ENCODE measurements at regions of chr11 and their contacts with region 1.

Region 1: DNA sequence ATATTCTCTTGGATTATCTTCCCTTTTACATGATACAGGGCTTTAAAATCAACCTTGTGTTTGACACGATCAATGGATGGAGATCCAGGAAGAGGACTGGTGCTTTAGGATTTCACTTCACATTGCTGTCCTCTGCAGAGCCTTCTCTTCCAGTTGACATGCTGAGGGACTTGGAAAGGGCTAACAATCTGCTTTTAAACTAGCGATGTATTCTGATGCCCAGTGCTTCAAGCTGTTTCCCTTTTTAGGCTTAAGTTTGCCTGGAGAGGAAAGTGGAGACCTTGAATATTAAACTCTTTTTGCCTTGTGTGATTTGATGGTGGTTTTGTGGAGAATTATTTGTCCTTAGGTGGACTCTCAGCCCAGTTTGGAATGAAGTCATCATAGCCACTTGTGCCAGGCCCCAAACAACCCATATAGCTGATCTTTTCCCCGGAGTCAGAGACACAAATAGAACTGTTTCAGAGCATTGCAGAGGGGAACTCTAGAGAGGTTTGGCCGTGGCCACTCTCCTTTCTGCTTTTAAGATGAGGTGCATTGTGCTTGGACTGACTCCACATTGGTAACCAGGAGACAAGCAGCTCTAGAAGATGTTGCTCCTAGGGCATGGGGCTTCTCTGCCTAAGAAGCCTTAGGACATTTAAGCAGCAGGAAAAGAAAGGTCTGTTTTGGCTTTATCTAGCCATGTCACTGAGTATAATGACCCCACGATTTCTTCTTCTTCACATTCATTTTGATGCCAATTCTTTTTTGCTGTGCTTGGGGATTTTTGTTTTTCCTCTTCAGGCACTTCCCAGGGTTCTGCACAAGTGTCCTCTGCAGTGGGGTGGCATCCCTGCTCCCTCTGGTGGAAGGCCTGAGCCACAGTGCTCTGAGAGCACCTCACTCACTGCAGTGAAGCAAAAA is 152.8 kb downstream of the NCAM1 start:
- DNase-seq: peak; percentile 66
- H3K4me3 Mint-ChIP-seq: no peak overlapping the region
- H3K27ac Mint-ChIP-seq: no peak overlapping the region
- H3K4me1 Mint-ChIP-seq: peaks cover 5% of the 10 kb centered on the region
- H3K27me3 Mint-ChIP-seq: no peaks in the 10 kb centered on the region
- CTCF ChIP-seq: peak; percentile 83

Region 2: DNA sequence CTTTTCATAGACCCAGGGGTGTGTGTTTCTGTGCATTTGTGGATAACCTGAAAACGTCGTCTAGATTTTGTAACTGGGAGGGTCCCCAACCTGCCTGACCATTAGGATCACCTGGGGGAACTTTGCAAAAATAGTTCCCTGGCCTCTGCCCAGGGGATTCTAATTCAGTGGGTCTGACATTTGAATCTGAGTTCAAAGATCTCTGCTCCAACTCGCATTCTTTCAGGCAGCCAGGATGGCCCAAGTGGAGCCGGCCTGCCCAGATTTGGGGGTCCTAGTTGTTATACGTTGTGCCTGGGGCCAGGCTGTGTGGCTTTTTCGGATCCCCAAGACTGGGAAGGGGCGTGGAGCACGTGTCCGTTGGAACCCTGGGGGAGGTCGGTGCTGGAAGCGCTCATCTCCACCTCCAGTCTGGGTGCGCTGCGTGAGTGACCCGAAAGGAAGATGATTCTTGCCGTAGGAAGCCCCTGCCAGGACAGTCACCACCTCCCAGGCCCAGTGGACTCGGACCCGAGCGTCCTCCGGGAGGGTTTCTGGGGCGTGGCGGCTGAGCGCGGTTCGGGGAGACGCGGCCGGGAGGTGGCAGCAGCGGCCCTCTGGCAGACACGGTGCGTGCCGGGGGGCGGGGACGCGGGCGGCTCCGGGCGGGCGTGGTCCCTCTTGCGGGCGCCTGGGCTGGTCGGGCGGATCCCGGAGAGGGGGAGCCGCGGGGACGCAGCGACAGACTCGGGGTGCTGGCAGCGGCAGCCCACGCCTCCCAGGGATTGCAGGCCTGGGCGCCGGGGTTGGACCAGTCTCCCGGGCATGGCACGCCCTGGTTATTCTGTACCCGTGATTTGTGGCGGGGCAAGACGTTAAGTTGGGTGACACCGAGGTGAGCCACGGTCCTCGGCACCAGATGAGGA is 824.2 kb before region 1 on chr11:
- CTCF ChIA-PET with region 1: interaction called, 15 read pairs
- POLR2A ChIA-PET with region 1: no interaction called
- intact Hi-C with region 1: loop called (anchors 5 kb)
- DNase-seq: peak; percentile 59
- H3K4me3 Mint-ChIP-seq: peak overlapping the region; percentile 67
- H3K27ac Mint-ChIP-seq: no peak overlapping the region
- H3K4me1 Mint-ChIP-seq: peaks cover 16% of the 10 kb centered on the region
- H3K27me3 Mint-ChIP-seq: peaks cover 11% of the 10 kb centered on the region
- CTCF ChIP-seq: peak; percentile 96

Region 3: GRCh38 chr11:112355726-112356125 is 758.3 kb before region 1 on chr11:
- CTCF ChIA-PET with region 1: no interaction called
- POLR2A ChIA-PET with region 1: no interaction called
- intact Hi-C with region 1: no loop called
- DNase-seq: peak; percentile 85
- H3K4me3 Mint-ChIP-seq: no peak overlapping the region
- H3K27ac Mint-ChIP-seq: no peak overlapping the region
- H3K4me1 Mint-ChIP-seq: no peaks in the 10 kb centered on the region
- H3K27me3 Mint-ChIP-seq: no peaks in the 10 kb centered on the region
- CTCF ChIP-seq: no peak

Region 4: DNA sequence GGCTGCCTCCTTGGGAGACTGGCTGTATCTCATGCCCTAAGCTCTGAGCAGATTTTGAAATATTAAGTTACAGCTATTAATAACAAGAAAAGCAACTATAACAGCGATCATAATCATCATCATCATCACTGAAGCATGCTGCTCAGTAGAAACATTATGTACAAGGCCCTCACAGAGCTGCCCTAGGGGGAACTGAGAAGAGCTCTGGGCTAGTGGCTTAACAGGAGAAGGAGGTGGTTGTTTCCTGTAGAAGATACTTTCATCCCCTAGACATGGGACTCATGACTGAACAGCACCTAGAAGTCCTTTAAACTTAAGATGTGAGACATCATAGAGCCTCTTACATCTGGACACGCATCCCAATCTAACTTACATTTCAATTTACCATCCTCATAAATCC is 520.6 kb before region 1 on chr11:
- CTCF ChIA-PET with region 1: interaction called, 69 read pairs
- POLR2A ChIA-PET with region 1: interaction called, 3 read pairs
- intact Hi-C with region 1: loop called (anchors 1 kb)
- DNase-seq: no peak
- H3K4me3 Mint-ChIP-seq: no peak overlapping the region
- H3K27ac Mint-ChIP-seq: no peak overlapping the region
- H3K4me1 Mint-ChIP-seq: no peaks in the 10 kb centered on the region
- H3K27me3 Mint-ChIP-seq: no peaks in the 10 kb centered on the region
- CTCF ChIP-seq: no peak

Region 5: DNA sequence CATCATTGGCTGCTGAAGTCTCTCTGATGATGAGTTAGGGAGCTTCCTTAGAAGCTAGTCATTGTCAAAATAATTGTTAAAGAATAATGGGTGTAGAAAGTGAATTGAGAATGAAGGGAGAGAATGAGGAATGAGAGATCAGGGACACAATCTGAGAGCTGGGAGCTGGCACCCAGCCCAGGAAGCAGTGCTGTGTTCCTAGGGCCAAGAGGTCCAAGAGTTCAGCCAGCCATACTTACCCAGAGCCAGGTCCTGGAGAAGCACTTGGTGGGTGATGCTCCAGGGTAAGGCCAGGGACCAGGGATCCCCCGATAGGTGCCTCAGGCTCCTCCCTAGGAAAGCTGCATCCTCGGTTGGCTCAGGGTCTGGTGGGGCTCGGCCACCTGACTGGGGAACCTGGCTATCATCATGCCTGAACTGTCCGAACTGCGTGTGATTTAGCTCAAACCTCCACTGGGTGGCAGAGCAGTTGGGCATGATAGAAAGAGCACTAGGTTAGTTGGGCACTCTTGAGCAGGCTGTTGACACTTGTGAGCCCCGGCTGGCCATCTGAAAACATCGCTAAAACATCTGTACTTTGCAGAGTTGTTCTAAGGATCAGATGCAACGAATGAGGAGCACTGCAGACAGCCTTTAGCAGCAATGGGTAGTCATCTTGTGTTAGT is 276.8 kb before region 1 on chr11:
- CTCF ChIA-PET with region 1: interaction called, 14 read pairs
- POLR2A ChIA-PET with region 1: no interaction called
- intact Hi-C with region 1: loop called (anchors 1 kb)
- DNase-seq: peak; percentile 33
- H3K4me3 Mint-ChIP-seq: no peak overlapping the region
- H3K27ac Mint-ChIP-seq: no peak overlapping the region
- H3K4me1 Mint-ChIP-seq: no peaks in the 10 kb centered on the region
- H3K27me3 Mint-ChIP-seq: peaks cover 15% of the 10 kb centered on the region
- CTCF ChIP-seq: peak; percentile 12

Region 6: DNA sequence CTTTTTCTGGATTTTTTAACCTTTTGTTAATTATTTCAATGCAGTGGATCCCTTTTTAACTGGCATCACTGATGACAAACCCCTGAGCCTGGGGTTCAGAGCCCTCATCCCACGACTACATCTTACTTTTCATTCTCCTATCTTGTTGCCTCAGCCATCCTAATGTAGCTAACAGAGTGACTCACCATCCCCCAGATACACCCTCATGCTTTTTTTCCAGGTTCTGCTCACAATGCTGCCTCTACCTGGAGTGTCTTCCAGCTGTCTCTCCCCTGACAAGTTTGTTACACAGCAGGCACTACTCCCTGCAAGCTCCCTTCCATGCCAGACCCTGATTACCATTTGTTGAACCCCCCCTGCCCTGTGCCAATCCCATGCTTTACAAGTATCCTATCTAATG is 17.4 kb before region 1 on chr11:
- CTCF ChIA-PET with region 1: interaction called, 10 read pairs
- POLR2A ChIA-PET with region 1: interaction called, 3 read pairs
- intact Hi-C with region 1: no loop called
- DNase-seq: no peak
- H3K4me3 Mint-ChIP-seq: no peak overlapping the region
- H3K27ac Mint-ChIP-seq: no peak overlapping the region
- H3K4me1 Mint-ChIP-seq: no peaks in the 10 kb centered on the region
- H3K27me3 Mint-ChIP-seq: peaks cover 8% of the 10 kb centered on the region
- CTCF ChIP-seq: no peak

Region 7: GRCh38 chr11:113289431-113290187 is 175.6 kb after region 1 on chr11:
- CTCF ChIA-PET with region 1: interaction called, 40 read pairs
- POLR2A ChIA-PET with region 1: no interaction called
- intact Hi-C with region 1: loop called (anchors 1 kb)
- DNase-seq: peak; percentile 58
- H3K4me3 Mint-ChIP-seq: no peak overlapping the region
- H3K27ac Mint-ChIP-seq: no peak overlapping the region
- H3K4me1 Mint-ChIP-seq: no peaks in the 10 kb centered on the region
- H3K27me3 Mint-ChIP-seq: peaks cover 38% of the 10 kb centered on the region
- CTCF ChIP-seq: peak; percentile 99

Region 8: GRCh38 chr11:113345978-113346377 is 231.9 kb after region 1 on chr11:
- CTCF ChIA-PET with region 1: no interaction called
- POLR2A ChIA-PET with region 1: no interaction called
- intact Hi-C with region 1: no loop called
- DNase-seq: peak; percentile 69
- H3K4me3 Mint-ChIP-seq: no peak overlapping the region
- H3K27ac Mint-ChIP-seq: no peak overlapping the region
- H3K4me1 Mint-ChIP-seq: no peaks in the 10 kb centered on the region
- H3K27me3 Mint-ChIP-seq: no peaks in the 10 kb centered on the region
- CTCF ChIP-seq: no peak

Measured in MCF 10A (cell line).